Heart right ventricle (tissue), 16 donors: ENCODE measurements at regions of chr3 and their contacts with region 1.

Region 1: DNA sequence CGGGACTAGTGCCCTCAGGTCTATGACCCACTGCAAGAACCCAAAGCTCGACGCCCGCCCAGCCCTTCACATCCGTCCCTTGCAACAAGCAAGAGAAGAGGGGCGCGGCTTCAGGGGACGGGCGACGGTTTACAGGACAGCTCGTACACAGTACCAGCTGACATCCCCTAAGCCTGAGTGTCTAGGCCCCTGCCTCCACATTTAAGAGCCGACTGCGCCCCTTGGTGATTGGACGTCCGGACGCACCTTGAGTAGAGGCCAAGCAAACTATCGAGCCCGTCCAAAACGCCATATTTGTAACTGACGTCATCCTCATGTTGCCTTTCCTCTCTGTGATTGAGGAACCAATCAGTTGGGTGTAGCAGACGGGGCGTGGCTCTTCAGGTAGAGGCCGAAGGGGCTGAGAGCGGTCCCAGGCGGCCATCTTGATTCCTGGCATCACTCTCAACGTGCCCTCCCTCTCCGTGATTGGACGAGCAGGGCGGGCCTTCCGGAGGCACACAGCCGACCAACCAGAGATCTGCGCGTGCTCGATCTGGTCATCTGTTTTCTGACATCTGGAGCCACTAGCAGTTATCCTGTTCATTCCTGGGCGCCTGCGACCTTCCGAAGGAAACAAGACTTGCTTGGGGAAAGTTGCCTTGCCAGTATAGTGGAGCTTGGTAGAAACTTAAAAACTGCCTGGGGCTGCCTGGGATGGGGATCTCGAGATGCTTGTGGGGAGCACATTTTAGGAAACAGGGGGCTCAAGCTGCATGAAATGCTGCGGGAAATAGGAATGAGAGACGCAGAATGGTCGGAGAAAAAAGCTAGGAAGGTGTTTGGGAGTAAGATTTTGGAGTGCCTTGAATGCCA is 4.0 kb upstream of the RPL14 start:
- DNase-seq: peak; percentile 96 to 98
- ATAC-seq: peak; percentile 94 to 98 (median 98)
- H3K4me3 ChIP-seq: peak overlapping the region; percentile 47 to 88 (median 68)
- H3K27ac ChIP-seq: peak overlapping the region; percentile 88 to 98 (median 94)
- H3K4me1 ChIP-seq: peaks cover 7 to 34% (median 28%) of the 10 kb centered on the region in 9 donors
- H3K27me3 ChIP-seq: no peaks in the 10 kb centered on the region
- CTCF ChIP-seq: peak in 2 of 9 donors; percentile 6 to 31

Region 2: DNA sequence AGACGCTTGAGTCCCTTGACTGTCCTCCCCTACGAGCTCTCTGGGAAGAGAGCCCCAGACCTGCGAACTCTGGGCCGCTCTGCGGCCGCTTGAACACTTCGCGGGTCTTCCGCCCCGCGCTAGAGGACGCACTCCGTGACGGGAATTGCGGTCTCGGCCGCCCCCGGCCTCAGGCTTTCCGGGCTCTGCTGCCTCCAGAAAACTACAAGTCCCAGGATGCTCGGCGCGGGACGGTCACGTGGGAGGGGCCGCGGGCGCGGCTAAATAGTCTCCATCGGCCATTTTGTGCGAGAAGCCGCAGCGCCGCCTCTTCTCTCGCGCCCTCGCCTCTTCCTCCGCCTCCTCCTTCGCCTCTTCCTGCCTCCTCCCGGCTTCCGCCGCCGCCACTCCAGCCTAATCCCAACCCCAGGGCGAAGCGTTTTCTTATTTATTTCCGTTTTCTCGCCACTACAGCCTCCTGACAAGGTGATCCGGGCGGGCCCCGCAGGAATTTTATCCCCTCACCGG is 143.6 kb before region 1 on chr3 and contains the start of gene EIF1B:
- intact Hi-C with region 1: loop called in 2 of 10 experiments (anchors 2 to 10 kb)
- DNase-seq: peak; percentile 99
- ATAC-seq: peak; percentile 94 to 98 (median 97)
- H3K4me3 ChIP-seq: peak within 1 kb of the TSS; percentile 65 to 98 (median 90)
- H3K27ac ChIP-seq: peak within 1 kb of the TSS; percentile 90 to 100 (median 98)
- H3K4me1 ChIP-seq: peaks cover 0 to 54% (median 43%) of the 10 kb centered on the region in 9 donors
- H3K27me3 ChIP-seq: no peaks in the 10 kb centered on the region
- CTCF ChIP-seq: peak; percentile 84 to 99 (median 94)
- total RNA-seq, gene EIF1B: 203 to 381 (median 303) TPM

Region 3: DNA sequence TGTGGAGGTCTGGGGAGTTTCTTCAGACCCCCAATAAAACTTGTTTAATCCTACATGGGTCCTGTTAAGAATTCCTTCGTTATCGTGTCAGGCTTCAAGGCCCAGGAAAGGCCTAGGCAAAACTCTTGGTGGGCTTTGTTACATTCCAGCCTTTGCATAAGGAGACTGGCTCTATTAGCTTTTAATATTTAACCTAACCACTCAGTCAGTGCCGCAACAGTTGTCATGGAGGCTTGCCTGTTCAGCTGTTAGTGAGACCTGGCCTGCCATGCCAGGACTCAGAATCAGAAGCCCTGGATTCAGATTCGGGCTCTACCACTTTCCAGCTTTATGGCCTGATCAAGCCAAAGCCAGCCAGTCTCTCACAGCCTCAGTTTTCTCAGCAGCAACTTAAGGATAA is 124.0 kb before region 1 on chr3:
- intact Hi-C with region 1: loop called in 7 of 10 experiments (anchors 5 to 10 kb)
- DNase-seq: no peak
- ATAC-seq: no peak
- H3K4me3 ChIP-seq: no peak overlapping the region
- H3K27ac ChIP-seq: no peak overlapping the region
- H3K4me1 ChIP-seq: peaks cover 0 to 13% (median 3%) of the 10 kb centered on the region in 9 donors
- H3K27me3 ChIP-seq: no peaks in the 10 kb centered on the region
- CTCF ChIP-seq: no peak

Region 4: DNA sequence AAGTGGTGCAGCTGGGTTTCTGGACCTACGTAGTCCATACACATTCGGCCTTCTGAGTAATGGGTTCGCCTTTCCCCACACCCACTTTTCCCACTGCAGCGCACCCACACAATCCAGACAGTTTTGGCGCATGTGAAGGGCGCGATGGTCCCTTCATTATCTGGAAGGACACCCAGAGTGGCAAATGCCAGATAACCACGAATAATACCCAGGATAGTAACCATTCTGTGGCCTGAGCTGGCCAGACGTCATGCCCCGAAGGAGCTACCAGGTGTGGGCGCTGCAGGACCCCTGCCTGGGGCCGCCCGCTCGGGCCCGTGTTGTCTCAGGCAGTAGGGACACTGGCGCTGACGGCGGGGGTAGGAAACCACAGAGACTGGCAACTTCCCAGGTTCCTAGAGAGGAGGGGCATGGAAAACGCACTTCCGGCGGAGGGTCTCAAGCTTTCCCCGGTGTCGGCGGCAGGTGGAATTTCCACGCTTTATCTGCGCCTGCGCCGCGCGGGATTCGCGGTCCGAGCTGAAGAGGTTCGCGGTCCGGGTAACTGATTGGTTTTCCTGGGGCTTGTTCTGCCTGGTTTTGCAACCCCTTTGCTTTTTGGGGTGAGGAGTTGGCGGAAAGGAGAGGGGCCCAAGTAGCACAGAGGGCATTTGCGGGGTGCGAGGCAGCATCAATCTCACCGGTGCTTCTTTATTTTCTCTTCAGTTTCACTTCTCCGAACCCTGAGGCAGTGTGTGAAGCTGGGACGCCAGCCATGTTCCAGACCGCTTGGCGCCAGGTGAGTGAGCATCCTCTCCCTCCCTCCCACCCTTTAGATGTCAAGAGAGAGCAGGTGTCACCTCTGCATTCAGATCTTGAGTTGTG is 52.7 kb after region 1 on chr3 and contains the start of gene ZNF620:
- intact Hi-C with region 1: loop called in 1 of 10 experiments (anchors 5 kb)
- DNase-seq: peak; percentile 73 to 86
- ATAC-seq: peak; percentile 92 to 98 (median 96)
- H3K4me3 ChIP-seq: peak within 1 kb of the TSS; percentile 46 to 77 (median 68)
- H3K27ac ChIP-seq: peak within 1 kb of the TSS; percentile 38 to 85 (median 74)
- H3K4me1 ChIP-seq: peaks cover 0 to 24% (median 12%) of the 10 kb centered on the region in 9 donors
- H3K27me3 ChIP-seq: no peaks in the 10 kb centered on the region
- CTCF ChIP-seq: peak in 7 of 9 donors; percentile 17 to 61 (median 34)
- total RNA-seq, gene ZNF620: 1.3 to 3.6 (median 2.7) TPM

Region 5: DNA sequence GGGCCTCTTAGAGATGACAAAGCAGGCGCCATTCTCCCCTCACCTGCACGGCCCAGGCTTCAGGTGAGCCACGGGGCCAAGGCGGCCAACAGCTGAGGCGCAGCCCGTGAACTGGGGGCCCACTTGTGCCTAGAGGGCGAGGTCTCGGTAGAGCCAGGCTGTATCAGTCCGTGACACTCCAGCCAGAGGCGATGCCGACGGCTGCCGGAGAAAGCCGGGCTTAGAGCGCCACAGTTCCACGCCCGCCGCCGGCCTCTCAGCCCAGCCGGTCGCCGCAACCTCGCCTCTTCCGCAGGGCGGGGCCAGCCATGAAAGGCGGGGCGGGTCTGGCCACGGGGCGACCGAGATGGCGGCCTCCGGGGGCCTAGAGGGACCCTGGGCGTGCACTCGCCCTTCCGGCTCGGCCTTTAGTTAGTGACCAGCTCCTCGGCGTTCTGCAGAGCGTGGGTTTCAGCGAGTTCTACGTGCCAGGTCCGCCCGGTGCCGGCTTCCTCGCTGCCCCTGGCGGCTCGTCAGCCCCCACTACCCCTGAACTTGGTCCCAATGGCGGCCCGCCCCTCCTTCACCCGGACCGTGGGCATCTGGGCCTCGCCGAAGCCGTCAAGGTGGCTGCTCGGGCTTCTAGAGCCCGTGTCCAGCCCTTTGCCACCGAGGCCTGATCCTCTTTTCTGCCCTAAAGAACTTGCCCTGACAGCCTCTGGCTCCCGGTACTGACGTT is 71.6 kb after region 1 on chr3 and contains the start of gene ZNF621:
- intact Hi-C with region 1: loop called in 6 of 10 experiments (anchors 2 to 10 kb)
- DNase-seq: peak; percentile 92 to 94
- ATAC-seq: peak; percentile 100
- H3K4me3 ChIP-seq: peak within 1 kb of the TSS; percentile 62 to 97 (median 78)
- H3K27ac ChIP-seq: peak within 1 kb of the TSS; percentile 57 to 96 (median 90)
- H3K4me1 ChIP-seq: peaks cover 0 to 22% (median 12%) of the 10 kb centered on the region in 9 donors
- H3K27me3 ChIP-seq: no peaks in the 10 kb centered on the region
- CTCF ChIP-seq: peak in 2 of 9 donors; percentile 14 to 20
- total RNA-seq, gene ZNF621: 8.9 to 14.6 (median 10.5) TPM

Region 6: DNA sequence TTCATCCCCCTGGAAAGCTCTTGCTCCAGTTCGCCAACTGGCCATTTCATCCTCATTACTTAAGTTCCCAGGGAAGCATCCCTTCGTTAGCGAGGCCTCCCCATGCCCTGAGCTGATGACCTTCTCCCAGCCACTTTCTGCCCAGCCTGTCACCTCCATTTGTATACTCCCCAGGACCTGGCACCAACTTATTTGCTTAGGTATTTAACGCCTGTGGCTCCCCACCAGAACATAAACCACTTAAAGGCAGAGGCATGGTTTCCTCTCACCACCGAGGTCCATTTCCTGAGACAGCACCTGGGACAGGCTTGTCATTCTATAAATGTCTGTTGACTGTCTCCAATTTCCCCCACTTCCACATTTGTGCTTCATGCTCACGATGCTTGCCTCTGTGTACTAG is 260.7 kb after region 1 on chr3:
- intact Hi-C with region 1: no loop called
- DNase-seq: no peak
- ATAC-seq: peak in 2 of 8 donors; percentile 5 to 30
- H3K4me3 ChIP-seq: no peak overlapping the region
- H3K27ac ChIP-seq: peak overlapping the region in 1 of 10 donors; percentile 15
- H3K4me1 ChIP-seq: peaks cover 0 to 24% (median 18%) of the 10 kb centered on the region in 9 donors
- H3K27me3 ChIP-seq: no peaks in the 10 kb centered on the region
- CTCF ChIP-seq: no peak

Region 7: GRCh38 chr3:41961750-41962679 is 1508.9 kb after region 1 on chr3 and contains the start of gene ULK4:
- intact Hi-C with region 1: loop called in 1 of 10 experiments (anchors 10 kb)
- DNase-seq: peak; percentile 95 to 98
- ATAC-seq: peak; percentile 97 to 99 (median 98)
- H3K4me3 ChIP-seq: peak within 1 kb of the TSS; percentile 78 to 97 (median 93)
- H3K27ac ChIP-seq: peak within 1 kb of the TSS in 9 of 10 donors; percentile 46 to 87 (median 75)
- H3K4me1 ChIP-seq: peaks cover 0 to 18% (median 12%) of the 10 kb centered on the region in 9 donors
- H3K27me3 ChIP-seq: no peaks in the 10 kb centered on the region
- CTCF ChIP-seq: no peak
- total RNA-seq, gene ULK4: 1.8 to 11.4 (median 2.9) TPM

Region 8: GRCh38 chr3:42118762-42119361 is 1665.8 kb after region 1 on chr3:
- intact Hi-C with region 1: loop called in 1 of 10 experiments (anchors 10 kb)
- DNase-seq: no peak
- ATAC-seq: peak; percentile 24 to 70 (median 53)
- H3K4me3 ChIP-seq: no peak overlapping the region
- H3K27ac ChIP-seq: peak overlapping the region in 6 of 10 donors; percentile 9 to 71 (median 49)
- H3K4me1 ChIP-seq: peaks cover 49 to 99% (median 85%) of the 10 kb centered on the region in 9 donors
- H3K27me3 ChIP-seq: no peaks in the 10 kb centered on the region
- CTCF ChIP-seq: peak in 7 of 9 donors; percentile 34 to 54 (median 47)